GM23248 (cell line): ENCODE measurements at regions of chr20 and their contacts with region 1.

Region 1: DNA sequence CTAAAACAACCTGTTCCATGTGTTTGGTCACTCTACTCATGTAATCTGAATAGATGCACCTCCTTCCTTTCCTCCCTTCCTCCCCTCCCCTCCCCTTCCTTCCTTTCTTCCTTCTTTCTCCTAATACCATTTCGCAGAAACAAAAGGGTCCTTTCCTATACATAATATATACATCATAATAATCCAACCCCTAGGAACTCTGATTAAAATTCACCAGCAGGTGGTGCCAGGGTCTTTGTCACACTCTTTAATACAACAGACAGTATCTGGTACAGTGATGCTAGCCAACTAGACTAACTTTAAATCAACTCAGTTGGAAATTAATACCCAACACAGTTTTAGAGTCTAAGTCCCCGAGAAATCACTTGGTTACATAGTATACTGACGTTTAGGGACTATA is 181.2 kb upstream of the SHLD1 start:
- DNase-seq: peak; percentile 56
- H3K4me3 ChIP-seq: no peak overlapping the region
- H3K27ac ChIP-seq: no peak overlapping the region
- H3K4me1 ChIP-seq: no peaks in the 10 kb centered on the region
- H3K27me3 ChIP-seq: no peaks in the 10 kb centered on the region

Region 2: DNA sequence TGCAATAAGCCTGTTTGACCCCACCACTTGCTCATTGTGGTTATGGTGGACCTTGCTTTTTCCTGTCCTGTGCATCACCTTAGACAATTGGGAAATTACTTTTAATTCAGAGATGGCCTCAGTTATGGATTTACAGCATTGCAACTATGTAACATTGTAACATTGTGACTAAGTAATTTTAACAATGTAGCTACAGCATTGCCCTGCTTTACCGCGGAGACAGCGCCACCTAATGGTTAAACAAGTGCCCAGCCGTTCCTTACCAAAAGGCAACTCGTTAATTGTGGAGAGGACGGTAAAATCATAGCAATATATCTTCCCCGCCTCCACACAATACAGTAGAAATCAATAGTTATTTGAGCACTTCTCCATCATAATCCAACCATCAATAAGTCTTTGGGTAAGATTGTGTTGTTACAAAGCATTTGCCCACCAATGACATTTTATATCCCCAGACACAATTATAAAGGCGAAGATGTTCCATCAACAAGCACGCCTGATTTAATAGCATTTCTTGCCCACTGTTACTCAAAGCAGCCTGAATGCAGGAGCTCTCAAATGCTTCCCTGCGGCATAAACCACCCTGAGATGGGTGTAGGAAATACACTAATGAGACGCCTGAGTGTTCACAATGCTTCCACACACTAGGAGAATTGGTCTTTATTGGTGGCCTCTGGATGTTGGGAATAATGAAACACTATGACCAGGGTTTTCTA is 345.9 kb before region 1 on chr20:
- in situ Hi-C with region 1: no loop called
- DNase-seq: peak; percentile 77
- H3K4me3 ChIP-seq: no peak overlapping the region
- H3K27ac ChIP-seq: no peak overlapping the region
- H3K4me1 ChIP-seq: no peaks in the 10 kb centered on the region
- H3K27me3 ChIP-seq: no peaks in the 10 kb centered on the region

Region 3: GRCh38 chr20:5788385-5788895 is 219.4 kb after region 1 on chr20:
- in situ Hi-C with region 1: loop called (anchors 10 kb)
- DNase-seq: peak; percentile 87
- H3K4me3 ChIP-seq: no peak overlapping the region
- H3K27ac ChIP-seq: no peak overlapping the region
- H3K4me1 ChIP-seq: peaks cover 14% of the 10 kb centered on the region
- H3K27me3 ChIP-seq: no peaks in the 10 kb centered on the region